Heart left ventricle (tissue), 16 donors: ENCODE measurements at regions of chr21 and their contacts with region 1.

Region 1: GRCh38 chr21:25024639-25025038 is 582.6 kb downstream of the MRPL39 start:
- DNase-seq: no peak
- ATAC-seq: no peak
- H3K4me3 ChIP-seq: no peak overlapping the region
- H3K27ac ChIP-seq: no peak overlapping the region
- H3K4me1 ChIP-seq: no peaks in the 10 kb centered on the region
- H3K27me3 ChIP-seq: no peaks in the 10 kb centered on the region
- CTCF ChIP-seq: no peak
- POLR2A ChIP-seq: no peak

Region 2: GRCh38 chr21:24935991-24936390 is 88.6 kb before region 1 on chr21:
- intact Hi-C with region 1: no loop called
- DNase-seq: no peak
- ATAC-seq: no peak
- H3K4me3 ChIP-seq: no peak overlapping the region
- H3K27ac ChIP-seq: no peak overlapping the region
- H3K4me1 ChIP-seq: no peaks in the 10 kb centered on the region
- H3K27me3 ChIP-seq: no peaks in the 10 kb centered on the region
- CTCF ChIP-seq: no peak
- POLR2A ChIP-seq: no peak

Region 3: GRCh38 chr21:24969068-24969467 is 55.6 kb before region 1 on chr21:
- intact Hi-C with region 1: loop called in 1 of 10 experiments (anchors 10 kb)
- DNase-seq: no peak
- ATAC-seq: no peak
- H3K4me3 ChIP-seq: no peak overlapping the region
- H3K27ac ChIP-seq: no peak overlapping the region
- H3K4me1 ChIP-seq: no peaks in the 10 kb centered on the region
- H3K27me3 ChIP-seq: no peaks in the 10 kb centered on the region
- CTCF ChIP-seq: no peak
- POLR2A ChIP-seq: no peak

Region 4: DNA sequence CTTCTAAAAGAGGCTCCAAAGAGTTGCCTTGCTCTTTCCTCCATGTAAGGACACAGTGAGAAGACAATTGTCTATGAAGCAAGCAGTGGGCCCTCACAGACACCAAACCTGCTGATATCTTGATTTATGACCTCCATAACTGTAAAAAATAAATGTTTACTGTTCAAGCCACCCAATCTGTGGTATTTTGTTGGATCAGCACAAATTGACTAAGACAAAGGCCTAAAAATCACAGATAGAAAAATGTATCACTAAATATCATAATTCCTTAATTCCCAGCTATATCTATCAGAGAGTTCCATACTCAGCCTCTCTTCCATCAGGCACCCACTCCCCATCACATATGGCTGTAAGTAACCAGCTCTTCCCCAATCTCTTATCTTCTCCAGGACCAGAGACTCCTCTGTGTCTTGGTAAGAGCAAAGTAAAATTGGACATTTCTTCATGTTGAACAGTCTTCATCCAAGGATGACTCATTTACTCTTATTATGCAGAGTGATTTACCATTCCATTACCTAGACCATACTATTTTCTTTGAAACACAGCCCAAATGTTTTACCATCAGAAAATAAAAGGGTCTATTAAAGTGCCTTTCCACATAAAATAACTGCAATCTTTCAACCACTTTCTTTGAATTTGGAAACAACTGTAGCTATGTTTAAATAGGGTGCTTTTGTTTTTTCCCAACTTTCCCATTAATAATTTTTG is 79.0 kb after region 1 on chr21:
- intact Hi-C with region 1: no loop called
- DNase-seq: no peak
- ATAC-seq: no peak
- H3K4me3 ChIP-seq: no peak overlapping the region
- H3K27ac ChIP-seq: no peak overlapping the region
- H3K4me1 ChIP-seq: no peaks in the 10 kb centered on the region
- H3K27me3 ChIP-seq: no peaks in the 10 kb centered on the region
- CTCF ChIP-seq: no peak
- POLR2A ChIP-seq: no peak